Left colon (tissue), 2 donors: ENCODE measurements at regions of chr5 and their contacts with region 1.

Region 1: DNA sequence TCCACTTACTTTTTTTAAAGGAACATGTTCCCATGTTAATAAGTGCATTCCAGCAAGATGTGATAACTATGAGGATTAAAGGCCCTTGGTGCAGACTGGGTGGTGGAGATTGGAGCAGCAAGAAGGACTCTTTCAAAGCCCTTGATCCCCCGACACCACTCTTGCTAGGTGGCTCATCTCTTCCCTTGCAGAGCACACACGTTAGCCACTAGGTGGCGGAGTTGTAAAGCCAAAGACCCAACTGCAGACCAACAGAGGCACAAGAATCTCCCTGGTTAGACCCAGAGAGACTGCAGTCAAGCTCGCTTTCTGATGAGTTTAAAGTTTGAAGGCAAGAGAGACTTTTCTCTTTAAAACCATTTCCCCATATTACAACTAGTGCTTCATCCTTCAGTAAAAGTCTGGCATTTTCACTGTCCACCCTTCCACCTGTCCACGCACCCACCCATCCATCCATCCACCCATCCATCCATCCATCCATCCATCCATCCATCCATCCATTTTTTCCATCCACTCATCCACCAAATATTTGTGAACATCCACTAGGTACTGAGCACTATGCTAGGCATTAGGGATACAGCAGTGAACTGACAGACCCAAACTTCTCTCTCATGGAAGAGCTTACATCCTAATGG is 226.9 kb downstream of the MSX2 start:
- DNase-seq: peak; percentile 34 to 41
- ATAC-seq: peak; percentile 82

Region 2: GRCh38 chr5:174844971-174845370 is 106.3 kb before region 1 on chr5:
- intact Hi-C with region 1: no loop called
- DNase-seq: peak in 1 of 2 donors; percentile 45
- ATAC-seq: no peak

Region 3: GRCh38 chr5:175288048-175288621 is 336.9 kb after region 1 on chr5:
- intact Hi-C with region 1: no loop called
- DNase-seq: peak in 1 of 2 donors; percentile 5
- ATAC-seq: no peak

Region 4: DNA sequence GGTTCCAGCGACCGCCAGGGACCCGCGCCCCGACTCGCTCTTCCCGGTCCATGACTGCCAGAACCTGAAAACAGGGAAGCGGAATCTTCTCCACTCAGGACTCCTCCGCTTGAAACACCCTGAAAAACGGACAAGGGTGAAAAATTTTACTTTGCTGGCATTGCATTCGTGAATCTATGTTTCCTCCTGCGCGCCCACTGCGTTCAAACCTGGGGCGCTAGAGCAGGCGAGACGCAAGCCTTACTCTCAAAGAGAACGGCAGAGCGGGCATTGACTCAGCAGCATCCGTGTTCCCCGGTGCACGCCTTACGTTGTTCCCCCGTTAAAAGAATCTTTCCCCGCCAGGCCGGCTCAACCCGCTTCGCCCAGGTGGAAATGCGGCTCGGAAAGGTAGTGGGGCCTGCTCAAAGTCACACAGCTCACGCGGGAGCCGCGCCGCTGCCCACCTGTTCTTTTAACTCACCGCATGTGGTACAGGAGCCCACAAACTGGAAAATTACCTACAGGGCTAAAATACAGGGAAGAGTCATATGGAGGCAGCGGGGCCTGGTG is 493.7 kb after region 1 on chr5:
- intact Hi-C with region 1: loop called in 1 of 2 experiments (anchors 5 kb)
- DNase-seq: no peak
- ATAC-seq: no peak